Activated CD4-positive, alpha-beta memory T cell treated with anti-CD3 and anti-CD28 coated beads for 36 hours (primary cell): ENCODE measurements at regions of chr19 and their contacts with region 1.

Region 1: GRCh38 chr19:29680447-29680846 is 15.2 kb downstream of the PLEKHF1 start:
- DNase-seq: peak; percentile 94
- H3K4me3 Mint-ChIP-seq: peak overlapping the region; percentile 63
- H3K27ac Mint-ChIP-seq: peak overlapping the region; percentile 89
- H3K4me1 Mint-ChIP-seq: peaks cover 58% of the 10 kb centered on the region
- H3K27me3 Mint-ChIP-seq: no peaks in the 10 kb centered on the region

Region 2: GRCh38 chr19:29645911-29646310 is 34.5 kb before region 1 on chr19:
- CTCF ChIA-PET with region 1: no interaction called
- POLR2A ChIA-PET with region 1: no interaction called
- intact Hi-C with region 1: no loop called
- DNase-seq: no peak
- H3K4me3 Mint-ChIP-seq: peak overlapping the region; percentile 21
- H3K27ac Mint-ChIP-seq: no peak overlapping the region
- H3K4me1 Mint-ChIP-seq: peaks cover 13% of the 10 kb centered on the region
- H3K27me3 Mint-ChIP-seq: no peaks in the 10 kb centered on the region

Region 3: DNA sequence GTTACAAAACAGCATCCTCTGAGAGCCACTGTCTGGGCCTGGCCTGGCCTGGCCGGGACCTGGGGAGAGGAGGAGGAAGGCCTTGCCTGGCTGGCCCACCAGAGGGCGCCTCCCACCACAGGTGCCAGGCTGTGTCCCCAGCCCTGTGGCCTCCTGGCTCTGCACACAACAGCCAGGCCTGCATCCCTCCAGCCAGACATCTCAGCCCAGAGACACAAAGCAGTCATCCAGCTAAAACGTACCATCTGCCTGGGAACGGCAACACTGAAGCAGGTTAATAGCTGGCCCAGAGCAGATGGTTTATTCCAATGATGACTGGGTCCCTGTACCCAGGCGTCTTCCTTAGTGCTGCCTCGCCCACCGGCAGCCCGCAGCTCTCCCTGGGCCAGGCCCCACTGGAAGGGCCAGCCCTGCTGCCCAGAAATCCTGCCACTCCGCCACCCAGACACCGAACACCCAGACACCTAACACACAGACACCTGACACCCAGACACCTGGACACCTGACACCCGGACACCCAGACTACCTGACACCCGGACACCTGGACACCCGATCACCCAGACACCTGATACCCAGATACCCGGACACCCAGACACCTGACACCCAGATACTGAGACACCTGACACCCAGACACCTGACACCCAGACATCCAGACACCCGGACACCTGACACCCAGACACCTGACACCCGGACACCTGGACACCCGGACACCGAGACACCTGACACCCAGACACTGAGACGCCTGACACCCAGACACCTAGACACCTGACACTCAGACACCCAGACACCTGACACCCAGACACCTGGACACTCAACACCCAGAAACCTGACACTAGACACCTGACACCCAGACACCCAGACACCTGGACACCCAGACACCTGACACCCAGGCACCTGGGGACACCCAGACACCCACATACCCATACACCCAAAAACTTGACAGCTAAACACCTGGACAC is 14.5 kb after region 1 on chr19:
- CTCF ChIA-PET with region 1: interaction called, 11 read pairs
- POLR2A ChIA-PET with region 1: no interaction called
- intact Hi-C with region 1: no loop called
- DNase-seq: peak; percentile 87
- H3K4me3 Mint-ChIP-seq: no peak overlapping the region
- H3K27ac Mint-ChIP-seq: no peak overlapping the region
- H3K4me1 Mint-ChIP-seq: peaks cover 11% of the 10 kb centered on the region
- H3K27me3 Mint-ChIP-seq: no peaks in the 10 kb centered on the region